CD14-positive monocyte (primary cell): ENCODE measurements at regions of chr9 and their contacts with region 1.

Region 1: DNA sequence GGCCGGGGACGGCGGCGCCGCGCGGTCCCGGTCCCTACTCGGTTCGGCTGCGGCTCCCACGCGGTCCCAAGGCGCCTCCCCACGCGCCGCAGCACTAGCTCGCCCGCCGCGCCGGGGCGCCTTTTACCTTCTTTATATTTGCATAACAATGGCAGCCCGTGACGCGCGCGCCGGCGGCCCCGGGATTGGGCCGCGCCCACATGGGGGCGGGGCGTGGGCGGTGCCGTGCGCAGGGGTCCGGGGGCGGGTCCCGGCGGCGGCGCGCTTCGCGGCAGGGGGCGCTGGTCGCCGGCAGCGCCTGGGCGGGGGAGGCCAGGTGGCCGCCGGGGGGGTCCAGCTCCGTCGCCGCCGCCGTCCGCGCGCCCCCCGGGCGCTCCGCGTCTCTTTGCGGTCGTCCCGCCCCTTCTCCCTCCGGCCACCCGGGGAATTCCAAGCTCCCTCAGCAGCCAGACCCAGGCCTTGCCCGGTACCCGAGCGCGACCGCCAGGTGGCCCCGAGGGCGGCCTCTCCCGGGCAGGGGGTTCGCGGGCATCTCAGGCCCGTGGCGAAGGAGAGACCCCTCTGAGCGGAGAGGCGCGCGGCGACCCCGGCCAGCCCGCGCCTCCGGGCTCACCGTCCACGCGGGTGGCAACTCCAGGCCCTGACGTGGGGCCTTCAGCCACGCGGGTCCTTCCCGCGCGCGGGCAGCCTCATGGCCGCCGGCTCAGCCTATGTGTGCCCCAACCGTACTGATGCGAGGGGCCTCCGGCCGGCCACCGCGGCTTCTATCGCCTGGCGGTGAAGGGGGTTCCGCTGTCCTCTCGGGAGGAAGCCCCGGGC is at the start of gene NRARP:
- DNase-seq: peak; percentile 78 to 86 (median 82)
- H3K4me3 ChIP-seq: peak within 1 kb of the TSS; percentile 15 to 69 (median 23)
- H3K4me3 Mint-ChIP-seq: peak within 1 kb of the TSS; percentile 74 to 91
- H3K27ac ChIP-seq: no peak within 1 kb of the TSS
- H3K27ac Mint-ChIP-seq: peak within 1 kb of the TSS in 1 of 7 donors; percentile 60
- H3K4me1 ChIP-seq: peaks cover 34 to 48% of the 10 kb centered on the region in 2 donors
- H3K4me1 Mint-ChIP-seq: peaks cover 22% of the 10 kb centered on the region
- H3K27me3 ChIP-seq: peaks cover 35 to 85% of the 10 kb centered on the region in 2 donors
- H3K27me3 Mint-ChIP-seq: peaks cover 67 to 89% (median 73%) of the 10 kb centered on the region in 3 donors
- CTCF ChIP-seq: peak; percentile 88
- polyA plus RNA-seq, gene NRARP: 15.4 TPM in 1 of 3 donors, not detected in the others

Region 2: DNA sequence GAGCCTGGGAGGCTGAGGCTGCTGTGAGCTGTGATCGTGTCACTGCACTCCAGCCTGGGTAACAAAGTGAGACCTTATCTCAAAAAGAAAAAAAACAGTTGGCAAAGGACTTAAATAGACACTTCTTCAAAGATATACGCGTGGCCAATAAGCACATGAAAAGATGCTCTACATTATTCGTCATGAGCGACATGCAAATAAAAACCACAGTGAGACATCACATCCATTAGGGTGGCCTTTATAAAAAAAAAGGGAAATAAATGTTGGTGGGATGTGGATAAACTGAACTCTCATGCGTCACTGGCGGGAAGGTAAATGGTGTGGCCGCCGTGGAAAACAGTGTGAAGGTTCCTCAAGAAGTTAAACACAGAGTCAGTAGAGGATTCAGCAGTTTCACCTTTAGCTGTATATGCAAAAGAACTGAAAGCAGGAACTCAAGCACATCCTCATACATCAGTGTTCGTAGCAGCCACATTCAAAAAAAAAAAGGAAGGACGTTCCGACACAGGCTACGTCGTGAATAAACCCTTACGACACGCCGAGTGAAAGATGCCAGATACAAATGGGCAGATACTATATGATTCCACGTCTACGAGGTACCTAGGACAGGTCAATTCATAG is 24.2 kb after region 1 on chr9:
- intact Hi-C with region 1: loop called (anchors 2 kb)
- DNase-seq: peak; percentile 91 to 93 (median 91)
- H3K4me3 ChIP-seq: peak overlapping the region in 1 of 3 experiments; percentile 47
- H3K4me3 Mint-ChIP-seq: peak overlapping the region in 1 of 2 donors; percentile 65
- H3K27ac ChIP-seq: peak overlapping the region; percentile 63 to 80
- H3K27ac Mint-ChIP-seq: peak overlapping the region; percentile 91 to 97 (median 94)
- H3K4me1 ChIP-seq: peaks cover 16% of the 10 kb centered on the region in 2 donors
- H3K4me1 Mint-ChIP-seq: peaks cover 17% of the 10 kb centered on the region
- H3K27me3 ChIP-seq: no peaks in the 10 kb centered on the region
- H3K27me3 Mint-ChIP-seq: peaks cover 0 to 1% (median 0%) of the 10 kb centered on the region in 3 donors
- CTCF ChIP-seq: no peak

Region 3: GRCh38 chr9:137406876-137407589 is 104.6 kb after region 1 on chr9:
- intact Hi-C with region 1: loop called in 1 of 2 experiments (anchors 5 kb)
- DNase-seq: peak in 2 of 3 donors; percentile 43 to 66
- H3K4me3 ChIP-seq: no peak overlapping the region
- H3K4me3 Mint-ChIP-seq: peak overlapping the region in 1 of 2 donors; percentile 30
- H3K27ac ChIP-seq: no peak overlapping the region
- H3K27ac Mint-ChIP-seq: no peak overlapping the region
- H3K4me1 ChIP-seq: peaks cover 13% of the 10 kb centered on the region in 2 donors
- H3K4me1 Mint-ChIP-seq: peaks cover 11% of the 10 kb centered on the region
- H3K27me3 ChIP-seq: peaks cover 9 to 34% of the 10 kb centered on the region in 2 donors
- H3K27me3 Mint-ChIP-seq: peaks cover 28 to 57% (median 35%) of the 10 kb centered on the region in 3 donors
- CTCF ChIP-seq: peak; percentile 76